Activated CD8-positive, alpha-beta T cell treated with anti-CD3 and anti-CD28 coated beads, Interleukin-2, amount 10 ng/mL, durations not matched to agents 7 days and 5 days (primary cell): ENCODE measurements at regions of chr9 and their contacts with region 1.

Region 1: DNA sequence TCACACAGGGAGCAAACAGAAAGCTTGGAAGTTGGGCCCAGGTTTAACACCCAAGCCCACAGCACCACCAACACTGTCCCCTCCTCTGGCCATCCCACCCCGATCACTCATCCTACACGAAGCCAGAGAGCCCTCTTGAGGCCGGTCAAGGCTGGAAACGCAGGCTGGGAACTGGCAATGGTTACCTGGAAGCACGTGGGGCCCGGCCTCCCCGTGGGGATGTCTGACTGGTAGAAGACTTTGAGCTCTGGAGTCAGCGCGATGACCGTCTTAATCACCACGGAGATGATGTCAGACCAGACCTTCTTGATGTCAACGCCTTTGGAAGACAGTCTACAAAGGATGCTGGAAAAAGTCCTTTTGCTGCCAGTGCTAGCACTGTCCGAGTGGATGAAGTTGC is 104.1 kb downstream of the TTLL11 start:
- DNase-seq: no peak
- ATAC-seq: no peak
- H3K4me3 Mint-ChIP-seq: no peak overlapping the region
- H3K27ac Mint-ChIP-seq: no peak overlapping the region
- H3K4me1 Mint-ChIP-seq: no peaks in the 10 kb centered on the region
- H3K27me3 Mint-ChIP-seq: no peaks in the 10 kb centered on the region

Region 2: DNA sequence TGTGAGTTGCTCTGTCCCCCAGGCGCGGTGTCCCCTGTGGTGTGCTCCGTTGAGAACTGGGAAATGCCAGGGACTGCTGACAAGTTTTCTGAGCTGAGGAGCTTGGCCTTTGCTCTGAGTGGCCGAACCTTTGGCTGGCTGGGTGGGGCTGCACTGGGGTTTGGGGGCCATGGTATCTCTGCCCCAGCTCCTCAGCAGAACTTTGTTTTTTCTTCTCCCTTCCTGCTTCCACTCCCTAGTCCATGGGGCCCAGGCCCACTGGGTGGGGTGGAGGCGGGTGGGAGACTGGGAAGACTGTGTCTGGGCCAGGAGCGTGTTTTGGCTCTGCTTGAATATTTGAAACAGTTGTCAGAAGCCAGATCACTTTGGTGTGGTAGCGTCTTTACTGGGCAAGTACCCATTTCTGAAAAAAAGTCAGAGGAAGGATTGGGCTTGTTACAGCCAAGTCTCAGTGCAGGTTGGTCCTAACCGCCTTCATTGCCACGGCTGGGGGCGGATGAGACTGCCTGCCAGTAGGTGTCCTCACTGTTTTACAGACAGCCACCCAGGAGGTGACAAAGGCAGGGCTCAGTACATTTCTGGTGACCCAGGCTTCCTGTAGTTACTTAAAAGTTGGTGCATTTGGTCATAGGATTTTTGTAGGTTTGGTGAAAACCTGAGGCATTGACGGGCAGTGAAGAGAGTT is 244.9 kb before region 1 on chr9:
- CTCF ChIA-PET with region 1: interaction called, 13 read pairs
- POLR2A ChIA-PET with region 1: no interaction called
- DNase-seq: peak; percentile 83
- ATAC-seq: peak; percentile 85
- H3K4me3 Mint-ChIP-seq: no peak overlapping the region
- H3K27ac Mint-ChIP-seq: no peak overlapping the region
- H3K4me1 Mint-ChIP-seq: peaks cover 27% of the 10 kb centered on the region
- H3K27me3 Mint-ChIP-seq: peaks cover 7% of the 10 kb centered on the region